ENCODE measurements at regions of chr4 and their contacts with region 1.

Region 1: GRCh38 chr4:39658756-39659155 is 20.1 kb upstream of the SMIM14 start:
- DNase-seq: no peak
- H3K4me3 ChIP-seq: no peak overlapping the region
- H3K27ac ChIP-seq: no peak overlapping the region
- H3K4me1 ChIP-seq: no peaks in the 10 kb centered on the region
- H3K27me3 ChIP-seq: no peaks in the 10 kb centered on the region
- CTCF ChIP-seq: peak in 2 of 3 experiments; percentile 58 to 66

Region 2: GRCh38 chr4:39469429-39470077 is 189.2 kb before region 1 on chr4:
- intact Hi-C with region 1: loop called (anchors 1 kb)
- DNase-seq: peak in 1 of 2 donors; percentile 80
- H3K4me3 ChIP-seq: no peak overlapping the region
- H3K27ac ChIP-seq: no peak overlapping the region
- H3K4me1 ChIP-seq: no peaks in the 10 kb centered on the region
- H3K27me3 ChIP-seq: no peaks in the 10 kb centered on the region
- CTCF ChIP-seq: peak; percentile 82 to 85 (median 84)

Region 3: DNA sequence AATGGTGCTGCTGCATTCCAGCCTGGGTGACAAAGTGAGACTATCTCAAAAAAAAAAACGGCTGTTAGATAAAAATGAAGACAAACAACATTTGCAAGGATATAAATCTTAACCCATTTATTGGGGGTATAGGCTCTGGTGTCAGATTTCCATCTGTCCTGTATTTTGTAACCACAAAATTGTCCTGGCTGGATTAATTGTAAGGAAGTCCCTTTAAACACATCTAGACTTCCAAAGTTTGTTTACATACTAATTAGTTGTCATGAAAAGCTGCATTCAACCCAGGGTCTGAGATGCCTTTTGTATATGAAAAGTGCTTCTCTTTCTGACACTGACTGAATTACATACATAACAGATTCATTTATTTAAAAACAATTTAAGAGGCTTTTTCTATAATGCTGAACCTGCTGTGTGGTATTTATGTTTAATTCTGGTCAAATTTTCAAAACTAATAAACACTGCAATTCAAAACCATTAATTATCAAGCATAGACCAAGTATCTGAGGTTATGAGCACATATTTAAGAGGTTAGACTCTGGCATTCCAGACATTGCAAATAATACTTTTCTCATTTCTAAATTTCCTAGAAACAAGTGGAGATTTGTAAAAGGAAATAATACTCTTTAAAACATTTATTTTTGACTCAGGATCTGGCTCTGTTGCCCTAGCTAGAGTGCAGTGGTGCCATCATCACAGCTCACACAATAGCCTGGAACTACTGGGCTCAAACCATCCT is 114.0 kb before region 1 on chr4:
- intact Hi-C with region 1: no loop called
- DNase-seq: no peak
- H3K4me3 ChIP-seq: no peak overlapping the region
- H3K27ac ChIP-seq: no peak overlapping the region
- H3K4me1 ChIP-seq: peaks cover 0 to 2% of the 10 kb centered on the region in 2 donors
- H3K27me3 ChIP-seq: no peaks in the 10 kb centered on the region
- CTCF ChIP-seq: no peak

Region 4: DNA sequence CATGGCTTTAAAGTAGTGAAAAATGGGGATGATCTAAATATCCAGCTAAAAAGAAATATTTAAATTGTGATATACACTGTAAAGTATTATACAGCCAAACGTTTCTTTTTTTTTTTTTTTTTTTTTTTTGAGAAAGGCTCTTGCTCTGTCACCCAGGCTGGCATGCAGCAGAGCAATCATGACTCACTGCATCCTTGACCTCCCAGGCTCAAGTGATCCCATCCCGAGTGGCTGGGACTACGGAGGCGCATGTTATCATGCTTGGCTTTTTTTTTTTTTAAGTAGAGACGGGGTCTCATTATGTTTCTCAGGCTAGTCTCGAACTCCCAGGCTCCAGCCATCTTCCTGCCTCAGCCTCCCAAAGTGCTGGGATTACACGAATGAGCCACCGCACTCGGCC is 37.2 kb before region 1 on chr4:
- intact Hi-C with region 1: no loop called
- DNase-seq: peak in 1 of 2 donors; percentile 83
- H3K4me3 ChIP-seq: peak overlapping the region in 1 of 2 donors; percentile 12
- H3K27ac ChIP-seq: peak overlapping the region; percentile 66 to 81
- H3K4me1 ChIP-seq: peaks cover 0 to 32% of the 10 kb centered on the region in 2 donors
- H3K27me3 ChIP-seq: no peaks in the 10 kb centered on the region
- CTCF ChIP-seq: no peak

Measured in ascending aorta (tissue), 2 donors.